ENCODE measurements at regions of chr10 and their contacts with region 1.

Region 1: GRCh38 chr10:104353325-104354048 is at the start of gene CFAP58:
- DNase-seq: peak; percentile 91 to 94
- H3K4me3 ChIP-seq: peak within 1 kb of the TSS; percentile 41 to 51
- H3K27ac ChIP-seq: peak within 1 kb of the TSS in 1 of 2 donors; percentile 12
- H3K4me1 ChIP-seq: peaks cover 0 to 20% (median 13%) of the 10 kb centered on the region in 4 donors
- H3K27me3 ChIP-seq: no peaks in the 10 kb centered on the region
- CTCF ChIP-seq: peak; percentile 67 to 75

Region 2: GRCh38 chr10:104045151-104046089 is 308.1 kb before region 1 on chr10:
- intact Hi-C with region 1: loop called (anchors 5 kb)
- DNase-seq: no peak
- H3K4me3 ChIP-seq: no peak overlapping the region
- H3K27ac ChIP-seq: no peak overlapping the region
- H3K4me1 ChIP-seq: no peaks in the 10 kb centered on the region
- H3K27me3 ChIP-seq: no peaks in the 10 kb centered on the region
- CTCF ChIP-seq: peak; percentile 54 to 61

Region 3: DNA sequence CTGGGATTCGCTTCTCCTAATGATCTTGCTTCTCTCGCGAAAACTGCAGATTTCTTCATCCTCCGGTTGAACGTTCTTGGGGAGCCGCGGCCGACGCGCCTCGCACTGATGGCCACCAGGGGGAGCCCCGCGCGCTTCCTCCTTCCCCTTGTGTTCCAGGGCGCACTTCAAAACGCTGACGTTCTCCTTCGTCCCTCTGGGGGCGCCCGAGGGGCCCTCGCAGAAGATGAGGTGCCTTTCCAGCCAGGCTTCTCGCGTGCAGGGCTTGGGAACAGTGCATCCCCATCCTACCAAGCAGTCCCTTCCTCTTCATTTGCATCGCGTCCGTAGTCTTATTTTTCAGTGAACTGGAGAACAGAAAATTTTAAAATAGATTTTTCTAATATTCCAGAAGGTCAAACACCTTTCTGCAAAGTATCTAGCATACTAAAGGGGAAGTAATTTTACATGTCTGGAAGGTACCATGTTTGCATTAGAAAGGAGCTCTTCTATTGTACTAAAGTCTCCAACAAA is 62.0 kb before region 1 on chr10:
- intact Hi-C with region 1: loop called (anchors 2 kb)
- DNase-seq: peak; percentile 87 to 92
- H3K4me3 ChIP-seq: no peak overlapping the region
- H3K27ac ChIP-seq: no peak overlapping the region
- H3K4me1 ChIP-seq: peaks cover 0 to 35% (median 7%) of the 10 kb centered on the region in 4 donors
- H3K27me3 ChIP-seq: no peaks in the 10 kb centered on the region
- CTCF ChIP-seq: peak; percentile 100

Measured in tibial artery (tissue), 4 donors.